PC-3 (cell line): ENCODE measurements at regions of chr16 and their contacts with region 1.

Region 1: GRCh38 chr16:77190478-77191258 is at the start of gene MON1B:
- DNase-seq: peak; percentile 94
- ATAC-seq: peak; percentile 98
- H3K4me3 ChIP-seq: peak within 1 kb of the TSS; percentile 75
- H3K27ac ChIP-seq: peak within 1 kb of the TSS; percentile 78
- H3K4me1 ChIP-seq: peaks cover 11% of the 10 kb centered on the region
- H3K27me3 ChIP-seq: no peaks in the 10 kb centered on the region
- CTCF ChIP-seq: no peak
- total RNA-seq, gene MON1B: 12.7 and 15.0 TPM in 2 replicates

Region 2: DNA sequence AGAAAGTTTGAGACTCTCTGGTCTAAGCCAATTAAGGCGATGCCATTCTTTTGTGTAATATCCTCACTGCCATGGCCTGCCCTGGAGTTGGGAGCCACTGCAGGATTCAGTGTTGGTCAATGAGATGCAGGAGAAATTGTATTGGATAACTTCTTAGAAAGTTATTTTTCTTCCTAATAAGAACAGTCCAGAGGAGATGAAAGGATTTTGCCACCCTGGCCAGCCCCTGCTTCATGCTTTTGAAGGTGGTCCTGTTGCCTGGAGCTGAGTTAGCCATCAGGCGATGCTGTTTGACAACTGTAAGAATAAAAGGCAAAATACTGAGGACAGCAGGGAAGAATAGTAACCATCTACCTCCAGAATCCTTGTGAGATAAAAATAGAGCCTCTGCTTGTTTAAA is 948.9 kb before region 1 on chr16:
- CTCF ChIA-PET with region 1: no interaction called
- POLR2A ChIA-PET with region 1: interaction called, 15 read pairs
- intact Hi-C with region 1: no loop called
- DNase-seq: no peak
- ATAC-seq: no peak
- H3K4me3 ChIP-seq: no peak overlapping the region
- H3K27ac ChIP-seq: no peak overlapping the region
- H3K4me1 ChIP-seq: no peaks in the 10 kb centered on the region
- H3K27me3 ChIP-seq: no peaks in the 10 kb centered on the region
- CTCF ChIP-seq: no peak

Region 3: DNA sequence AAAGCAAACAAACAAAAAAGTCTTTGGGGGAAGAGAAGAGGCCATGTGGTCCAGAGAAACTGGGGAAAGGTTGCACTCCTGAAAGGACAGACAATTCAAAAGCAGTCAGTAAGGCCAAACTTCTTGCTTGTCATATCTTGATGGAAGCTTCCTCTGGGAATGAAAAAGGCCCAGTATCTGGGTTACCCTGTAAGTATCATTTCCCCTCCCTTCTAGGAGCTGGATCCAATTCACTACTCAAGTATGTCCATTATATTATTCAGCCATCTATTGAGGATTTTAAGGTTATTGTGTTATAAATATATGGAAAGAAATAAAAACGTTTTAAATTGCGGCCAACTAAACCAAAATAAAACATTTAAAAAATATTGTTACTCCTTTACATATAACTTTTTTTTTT is 25.7 kb before region 1 on chr16:
- CTCF ChIA-PET with region 1: no interaction called
- POLR2A ChIA-PET with region 1: no interaction called
- intact Hi-C with region 1: no loop called
- DNase-seq: no peak
- ATAC-seq: no peak
- H3K4me3 ChIP-seq: no peak overlapping the region
- H3K27ac ChIP-seq: no peak overlapping the region
- H3K4me1 ChIP-seq: no peaks in the 10 kb centered on the region
- H3K27me3 ChIP-seq: peaks cover 53% of the 10 kb centered on the region
- CTCF ChIP-seq: no peak

Region 4: GRCh38 chr16:77211880-77212740 is 21.4 kb after region 1 on chr16:
- CTCF ChIA-PET with region 1: no interaction called
- POLR2A ChIA-PET with region 1: no interaction called
- intact Hi-C with region 1: loop called (anchors 2 kb)
- DNase-seq: peak; percentile 61
- ATAC-seq: peak; percentile 39
- H3K4me3 ChIP-seq: peak overlapping the region; percentile 77
- H3K27ac ChIP-seq: peak overlapping the region; percentile 84; the same call in 1 of the 2 replicates
- H3K4me1 ChIP-seq: peaks cover 18% of the 10 kb centered on the region
- H3K27me3 ChIP-seq: no peaks in the 10 kb centered on the region
- CTCF ChIP-seq: no peak

Region 5: GRCh38 chr16:77223184-77223583 is 32.5 kb after region 1 on chr16:
- CTCF ChIA-PET with region 1: no interaction called
- POLR2A ChIA-PET with region 1: no interaction called
- intact Hi-C with region 1: no loop called
- DNase-seq: peak; percentile 8
- ATAC-seq: no peak
- H3K4me3 ChIP-seq: no peak overlapping the region
- H3K27ac ChIP-seq: no peak overlapping the region
- H3K4me1 ChIP-seq: peaks cover 19% of the 10 kb centered on the region
- H3K27me3 ChIP-seq: no peaks in the 10 kb centered on the region
- CTCF ChIP-seq: peak; percentile 48